ENCODE measurements at regions of chr3 and their contacts with region 1.

Region 1: GRCh38 chr3:156674046-156674910 is at the start of gene TIPARP:
- DNase-seq: peak; percentile 99 to 100 (median 99)
- H3K4me3 ChIP-seq: peak within 1 kb of the TSS; percentile 77
- H3K27ac ChIP-seq: peak within 1 kb of the TSS; percentile 88 to 90
- H3K4me1 ChIP-seq: peaks cover 4% of the 10 kb centered on the region
- H3K27me3 ChIP-seq: no peaks in the 10 kb centered on the region
- CTCF ChIP-seq: peak; percentile 61 to 86 (median 78)
- EP300 ChIP-seq: no peak
- POLR2A ChIP-seq: peak; percentile 97
- total RNA-seq, gene TIPARP: 26.3 to 109 (median 48.7) TPM

Region 2: DNA sequence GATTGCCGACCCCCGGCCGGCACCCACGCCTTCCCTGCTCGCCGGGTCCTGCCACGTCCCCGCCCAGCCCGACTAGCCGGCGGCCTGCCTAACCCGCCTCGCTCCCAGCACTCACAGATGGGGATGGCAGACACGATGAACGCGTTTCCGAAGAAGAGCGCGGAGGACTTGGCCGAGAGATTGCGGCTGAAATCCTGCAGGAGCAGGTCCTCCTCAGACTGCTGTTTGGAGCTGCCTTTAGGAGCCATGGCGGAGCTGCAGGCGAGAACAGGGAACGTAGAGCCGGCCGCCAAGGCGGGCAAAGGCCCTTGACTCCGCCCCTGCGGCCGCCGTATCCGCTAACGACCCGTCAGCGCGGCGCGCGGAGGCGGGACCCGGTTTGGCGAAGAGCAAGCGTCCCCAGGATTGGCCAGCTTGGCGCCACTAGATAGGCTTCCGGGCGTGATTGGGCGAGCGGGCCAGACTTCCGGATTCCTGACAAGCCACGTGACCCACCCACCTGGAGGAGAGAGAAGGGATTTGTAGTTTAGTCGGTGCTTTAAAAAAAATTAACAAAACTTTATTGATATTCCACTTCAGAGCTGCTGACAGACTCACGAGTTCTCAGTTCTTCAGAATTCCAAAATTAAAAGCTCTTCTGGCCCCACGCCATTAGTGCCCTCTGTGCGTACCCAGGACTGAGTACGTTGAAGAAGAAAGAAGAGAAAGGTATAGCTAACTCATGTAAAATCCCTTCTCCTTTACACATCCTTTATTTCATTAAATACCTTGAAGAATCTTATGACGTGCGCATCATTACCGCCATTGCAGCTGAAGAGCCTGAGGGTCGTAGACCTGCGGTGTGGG is 119.2 kb before region 1 on chr3 and contains the start of gene SSR3:
- intact Hi-C with region 1: loop called in 2 of 4 experiments (anchors 5 kb)
- DNase-seq: peak; percentile 99 to 100 (median 99)
- H3K4me3 ChIP-seq: peak within 1 kb of the TSS; percentile 96
- H3K27ac ChIP-seq: peak within 1 kb of the TSS; percentile 41 to 66
- H3K4me1 ChIP-seq: peaks cover 12% of the 10 kb centered on the region
- H3K27me3 ChIP-seq: no peaks in the 10 kb centered on the region
- CTCF ChIP-seq: peak; percentile 31 to 74 (median 61)
- EP300 ChIP-seq: no peak
- POLR2A ChIP-seq: peak; percentile 47
- total RNA-seq, gene SSR3: 53.4 to 303 (median 160) TPM

Region 3: DNA sequence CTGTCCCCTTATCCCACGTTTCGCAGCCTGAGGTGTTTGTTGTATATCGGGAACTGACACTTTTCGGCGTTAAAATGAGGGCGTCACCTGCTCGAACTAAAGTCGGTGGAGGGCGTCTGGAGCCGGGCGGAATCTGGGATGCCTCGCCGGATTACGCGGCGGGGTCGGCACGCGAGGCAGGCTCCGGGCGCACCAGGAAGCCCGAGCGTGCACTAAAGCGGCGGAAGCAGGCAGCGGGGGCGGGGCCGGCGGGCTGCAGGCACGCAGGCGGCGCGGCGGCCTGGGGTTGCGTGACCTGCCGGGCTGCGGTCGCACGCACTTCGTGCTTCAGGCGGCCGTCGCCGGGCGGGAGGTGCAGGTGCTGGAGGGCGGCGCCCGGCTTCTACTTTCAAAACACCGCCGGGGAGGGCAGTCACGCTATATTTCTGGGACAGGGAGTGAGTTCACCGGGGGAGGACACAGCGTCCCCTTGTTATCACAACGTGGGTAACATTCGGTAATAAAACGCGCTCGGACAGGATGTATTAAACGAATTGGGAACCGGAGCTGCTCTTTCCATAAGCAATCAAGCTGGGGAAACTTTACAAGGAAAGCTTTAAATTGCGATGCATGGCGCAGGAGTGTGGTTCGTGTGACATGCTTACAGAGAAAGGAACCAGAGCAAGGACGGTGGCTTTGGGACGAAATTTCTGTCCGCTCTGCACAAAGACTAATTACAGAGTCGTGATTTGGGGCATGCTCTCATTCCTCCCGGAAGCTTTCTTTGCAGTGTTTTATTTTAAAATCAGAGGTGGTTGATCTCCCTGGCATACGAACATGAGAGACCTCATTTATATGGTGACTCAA is 142.7 kb after region 1 on chr3:
- intact Hi-C with region 1: loop called in 2 of 4 experiments (anchors 10 kb)
- DNase-seq: peak; percentile 75 to 87 (median 77)
- H3K4me3 ChIP-seq: peak overlapping the region; percentile 44
- H3K27ac ChIP-seq: peak overlapping the region; percentile 62 to 66
- H3K4me1 ChIP-seq: no peaks in the 10 kb centered on the region
- H3K27me3 ChIP-seq: no peaks in the 10 kb centered on the region
- CTCF ChIP-seq: no peak
- EP300 ChIP-seq: peak; percentile 56
- POLR2A ChIP-seq: no peak

Region 4: DNA sequence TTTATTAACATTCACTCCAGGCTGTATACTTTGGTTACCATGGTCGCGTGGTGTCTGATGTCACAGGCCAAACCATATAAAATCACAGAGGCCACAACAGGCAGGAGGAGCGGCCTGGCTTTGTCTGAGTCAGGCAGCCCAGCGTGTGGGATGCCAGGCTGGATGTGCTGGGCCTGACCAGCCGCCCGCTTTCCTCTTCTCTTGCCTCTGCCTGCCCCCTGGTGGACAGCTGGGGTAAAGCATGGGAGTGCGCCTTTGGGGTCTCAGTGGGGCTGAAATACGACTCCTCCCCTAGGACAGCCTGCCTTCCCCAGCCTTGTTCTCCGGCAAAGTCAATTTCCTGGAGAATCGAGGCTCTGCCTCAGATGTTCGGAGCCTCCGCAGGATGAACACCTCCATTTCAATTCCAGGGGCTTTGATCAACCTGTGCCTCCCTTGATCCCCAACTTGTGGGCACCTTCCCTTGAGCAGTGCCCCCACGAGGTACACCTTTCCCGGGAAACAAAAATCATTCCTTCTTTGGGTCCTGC is 407.5 kb after region 1 on chr3:
- intact Hi-C with region 1: loop called in 3 of 4 experiments (anchors 5 to 10 kb)
- DNase-seq: peak; percentile 87 to 93 (median 93)
- H3K4me3 ChIP-seq: no peak overlapping the region
- H3K27ac ChIP-seq: no peak overlapping the region
- H3K4me1 ChIP-seq: peaks cover 3% of the 10 kb centered on the region
- H3K27me3 ChIP-seq: no peaks in the 10 kb centered on the region
- CTCF ChIP-seq: peak; percentile 77 to 97 (median 96)
- EP300 ChIP-seq: no peak
- POLR2A ChIP-seq: no peak

Region 5: GRCh38 chr3:157136647-157137387 is 462.5 kb after region 1 on chr3:
- intact Hi-C with region 1: loop called (anchors 5 to 10 kb)
- DNase-seq: no peak
- H3K4me3 ChIP-seq: no peak overlapping the region
- H3K27ac ChIP-seq: peak overlapping the region in 1 of 2 donors; percentile 37
- H3K4me1 ChIP-seq: peaks cover 10% of the 10 kb centered on the region
- H3K27me3 ChIP-seq: no peaks in the 10 kb centered on the region
- CTCF ChIP-seq: no peak
- EP300 ChIP-seq: no peak
- POLR2A ChIP-seq: no peak